ENCODE measurements at regions of chr1 and their contacts with region 1.

Region 1: DNA sequence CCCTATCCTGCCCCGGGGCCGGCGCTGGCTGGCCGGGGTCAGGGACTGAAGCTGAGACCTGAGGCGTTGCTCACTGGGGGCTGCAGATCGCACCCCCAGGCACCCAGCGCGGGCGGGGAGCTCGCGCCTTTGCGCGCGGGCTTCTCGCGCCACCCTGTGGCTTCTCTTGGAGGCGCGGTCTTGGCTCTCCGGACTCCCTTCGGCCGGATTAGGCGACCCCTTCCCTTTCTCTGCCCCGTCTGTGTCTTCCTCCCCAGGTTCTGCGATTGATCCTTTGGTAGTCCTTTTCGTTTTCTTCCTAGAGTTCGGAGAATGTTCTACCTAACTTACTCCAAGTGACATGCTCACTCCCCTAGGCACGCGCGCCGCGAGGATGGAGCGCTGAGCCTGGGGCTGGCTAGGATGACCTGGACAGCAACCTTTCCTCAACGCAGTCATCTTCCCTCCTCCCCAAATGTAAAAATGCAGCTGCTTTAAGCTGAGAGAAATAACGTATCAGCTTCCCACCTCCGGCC is 495 bp upstream of the NTRK1 start:
- DNase-seq: peak; percentile 65
- H3K4me3 Mint-ChIP-seq: peak overlapping the region; percentile 65
- H3K27ac Mint-ChIP-seq: no peak overlapping the region
- H3K4me1 Mint-ChIP-seq: peaks cover 54% of the 10 kb centered on the region
- H3K27me3 Mint-ChIP-seq: peaks cover 90% of the 10 kb centered on the region

Region 2: GRCh38 chr1:156480411-156481192 is 379.6 kb before region 1 on chr1:
- CTCF ChIA-PET with region 1: no interaction called
- DNase-seq: peak; percentile 84
- H3K4me3 Mint-ChIP-seq: no peak overlapping the region
- H3K27ac Mint-ChIP-seq: peak overlapping the region; percentile 72
- H3K4me1 Mint-ChIP-seq: peaks cover 30% of the 10 kb centered on the region
- H3K27me3 Mint-ChIP-seq: no peaks in the 10 kb centered on the region

Region 3: DNA sequence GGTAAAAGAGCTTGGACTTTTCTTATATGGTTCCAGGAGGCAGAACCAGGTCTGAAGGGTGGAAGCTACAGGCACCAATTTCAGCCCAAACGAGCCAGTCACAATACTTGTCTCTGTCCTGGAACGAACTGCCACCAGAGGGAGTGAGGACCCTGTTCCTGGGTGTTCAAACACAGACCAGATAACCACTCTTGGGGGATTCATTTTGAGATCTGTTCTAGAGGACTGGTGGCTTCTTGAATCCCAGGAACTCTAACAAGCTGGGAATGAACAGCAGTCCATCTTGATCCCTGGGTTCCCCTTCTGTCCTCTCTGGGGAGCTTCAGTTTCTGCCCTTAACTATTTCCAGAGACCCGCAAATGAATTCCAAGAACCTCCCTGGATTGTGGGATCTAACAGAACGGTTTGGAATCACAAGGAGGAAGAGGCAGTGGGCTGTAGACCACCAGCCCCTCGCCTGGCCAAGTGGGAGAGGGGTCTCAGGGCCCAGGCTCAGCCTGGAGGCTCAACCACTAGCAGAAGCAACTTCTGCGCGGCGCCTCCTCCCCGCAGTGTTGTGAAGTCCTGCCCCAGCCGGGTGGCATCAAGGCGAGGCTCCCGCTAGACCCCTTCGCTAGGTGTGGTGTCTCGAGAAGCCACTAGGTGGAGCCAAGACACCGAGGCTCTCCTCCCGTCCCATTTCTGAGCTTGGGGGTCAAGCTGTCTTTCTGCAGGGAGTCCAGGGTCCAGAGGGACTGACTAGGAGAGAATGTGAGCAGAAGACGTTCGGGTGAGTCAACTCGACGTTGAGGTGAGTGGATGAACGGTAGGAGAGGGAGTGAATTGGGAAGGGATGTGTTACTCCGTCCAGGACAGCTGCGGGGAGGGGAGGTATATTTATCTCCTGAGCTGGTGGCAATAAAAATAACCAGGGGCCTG is 170.9 kb before region 1 on chr1:
- CTCF ChIA-PET with region 1: interaction called, 45 read pairs
- DNase-seq: peak; percentile 84
- H3K4me3 Mint-ChIP-seq: no peak overlapping the region
- H3K27ac Mint-ChIP-seq: no peak overlapping the region
- H3K4me1 Mint-ChIP-seq: peaks cover 34% of the 10 kb centered on the region
- H3K27me3 Mint-ChIP-seq: peaks cover 81% of the 10 kb centered on the region

Region 4: GRCh38 chr1:156789621-156790318 is 70.4 kb before region 1 on chr1:
- CTCF ChIA-PET with region 1: interaction called, 240 read pairs
- DNase-seq: no peak
- H3K4me3 Mint-ChIP-seq: no peak overlapping the region
- H3K27ac Mint-ChIP-seq: no peak overlapping the region
- H3K4me1 Mint-ChIP-seq: peaks cover 6% of the 10 kb centered on the region
- H3K27me3 Mint-ChIP-seq: no peaks in the 10 kb centered on the region

Region 5: DNA sequence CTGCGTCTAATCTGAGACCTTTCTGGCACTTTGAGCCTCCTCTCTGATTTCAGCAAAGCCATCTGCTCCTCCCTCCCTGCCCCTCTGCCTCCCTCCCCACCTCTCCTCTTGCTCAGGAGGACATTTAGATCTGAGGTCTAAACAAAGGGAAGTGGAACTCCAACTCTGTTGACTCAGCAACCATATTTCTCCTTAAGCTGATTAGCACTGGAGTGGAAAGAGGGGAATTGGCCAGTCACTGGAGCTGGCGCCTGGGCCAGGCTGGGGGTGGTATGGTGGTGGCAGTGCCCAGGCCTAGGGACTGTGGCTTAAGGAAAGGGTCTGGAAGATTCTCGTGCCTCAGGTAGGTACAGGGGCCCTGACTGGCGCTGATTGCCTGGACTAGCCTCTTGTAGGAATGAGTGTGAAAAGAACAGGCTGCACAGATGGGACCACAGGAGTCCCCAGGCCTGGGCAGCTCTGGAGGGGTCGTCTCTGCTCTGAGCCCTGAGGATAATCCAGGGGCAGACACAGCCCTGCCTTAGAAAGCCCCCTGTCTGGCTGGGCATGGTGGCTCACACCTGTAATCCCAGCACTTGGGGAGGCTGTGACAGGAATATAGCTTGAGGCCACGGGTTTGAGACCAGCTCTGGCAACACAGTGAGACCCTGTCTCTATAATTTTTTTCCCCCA is 55.5 kb before region 1 on chr1:
- CTCF ChIA-PET with region 1: interaction called, 240 read pairs
- DNase-seq: no peak
- H3K4me3 Mint-ChIP-seq: no peak overlapping the region
- H3K27ac Mint-ChIP-seq: peak overlapping the region; percentile 40
- H3K4me1 Mint-ChIP-seq: peaks cover 40% of the 10 kb centered on the region
- H3K27me3 Mint-ChIP-seq: no peaks in the 10 kb centered on the region

Region 6: GRCh38 chr1:156828400-156829124 is 31.6 kb before region 1 on chr1:
- CTCF ChIA-PET with region 1: interaction called, 191 read pairs
- DNase-seq: no peak
- H3K4me3 Mint-ChIP-seq: no peak overlapping the region
- H3K27ac Mint-ChIP-seq: no peak overlapping the region
- H3K4me1 Mint-ChIP-seq: peaks cover under 1% of the 10 kb centered on the region
- H3K27me3 Mint-ChIP-seq: peaks cover 66% of the 10 kb centered on the region

Region 7: DNA sequence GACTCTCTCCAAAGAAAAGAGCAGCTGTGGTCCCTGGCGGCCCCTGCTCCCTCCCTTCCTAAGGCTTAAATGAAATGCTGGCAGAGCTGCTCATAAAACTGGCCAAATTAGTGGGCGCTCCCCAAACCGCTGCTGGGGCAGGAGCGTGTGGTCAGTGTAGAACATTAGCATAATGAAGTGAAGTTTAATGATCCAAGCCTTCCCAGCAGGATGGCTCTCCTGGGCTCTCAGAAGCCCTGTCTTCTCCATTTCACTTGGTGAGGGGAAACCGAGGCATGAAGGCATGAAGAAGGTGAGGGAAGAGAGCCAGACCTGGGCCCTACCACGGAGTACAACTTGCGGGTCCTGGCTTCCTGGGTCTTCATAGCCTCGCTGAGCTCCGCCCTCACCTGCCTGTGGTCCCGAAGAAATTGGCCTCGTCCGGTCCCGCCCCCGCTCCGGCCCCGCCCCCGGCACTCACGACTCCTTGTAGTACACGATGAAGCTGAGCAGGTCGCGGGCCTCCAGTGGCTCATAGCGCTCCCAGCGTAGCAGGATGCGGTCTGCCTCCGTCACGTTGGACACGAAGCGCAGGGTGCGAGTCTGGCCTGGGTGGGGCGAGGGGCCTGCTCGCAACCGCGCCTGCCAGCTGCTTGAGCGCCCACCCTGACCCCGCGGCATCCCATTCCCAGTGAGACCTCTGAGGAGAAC is 11.6 kb before region 1 on chr1:
- CTCF ChIA-PET with region 1: interaction called, 45 read pairs
- DNase-seq: peak; percentile 90
- H3K4me3 Mint-ChIP-seq: peak overlapping the region; percentile 44
- H3K27ac Mint-ChIP-seq: peak overlapping the region; percentile 26
- H3K4me1 Mint-ChIP-seq: peaks cover 42% of the 10 kb centered on the region
- H3K27me3 Mint-ChIP-seq: peaks cover 86% of the 10 kb centered on the region